ENCODE measurements at regions of chr14 and their contacts with region 1.

Region 1: GRCh38 chr14:71221119-71221518 is 313.9 kb downstream of the PCNX1 start:
- DNase-seq: no peak
- H3K4me3 Mint-ChIP-seq: no peak overlapping the region
- H3K27ac Mint-ChIP-seq: no peak overlapping the region
- H3K4me1 Mint-ChIP-seq: peaks cover 34% of the 10 kb centered on the region
- H3K27me3 Mint-ChIP-seq: peaks cover 3% of the 10 kb centered on the region

Region 2: DNA sequence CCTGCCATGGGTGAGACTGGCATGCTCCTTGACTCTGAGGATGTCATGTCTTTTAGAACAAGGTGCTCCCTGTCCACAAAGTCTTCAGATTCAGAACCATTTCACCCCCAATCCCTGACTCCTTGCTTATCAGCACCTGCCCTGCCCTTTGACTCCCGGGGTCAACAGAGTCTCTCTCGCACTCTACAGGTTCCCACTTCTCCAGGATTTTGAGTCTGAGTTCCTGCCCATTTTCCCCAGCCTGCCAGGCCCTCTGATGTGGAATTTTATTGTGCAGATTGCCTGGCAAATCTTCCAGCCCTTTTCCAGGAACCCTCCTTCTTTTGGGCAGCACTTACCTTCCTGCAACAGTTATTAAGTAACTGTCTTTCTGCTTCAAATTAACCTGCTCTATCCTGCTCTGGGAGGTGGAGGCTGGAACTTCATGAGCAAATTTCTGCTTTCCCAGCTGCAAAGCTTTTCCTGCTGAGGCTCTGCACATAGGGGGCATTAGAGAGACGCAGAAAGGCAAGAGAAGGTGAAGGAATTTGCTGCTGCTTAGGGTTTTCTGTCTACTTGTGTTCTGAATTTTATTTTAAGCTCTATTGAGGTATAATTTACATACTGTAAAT is 54.8 kb before region 1 on chr14:
- intact Hi-C with region 1: loop called (anchors 2 kb)
- DNase-seq: no peak
- H3K4me3 Mint-ChIP-seq: no peak overlapping the region
- H3K27ac Mint-ChIP-seq: no peak overlapping the region
- H3K4me1 Mint-ChIP-seq: peaks cover 20% of the 10 kb centered on the region
- H3K27me3 Mint-ChIP-seq: peaks cover 10% of the 10 kb centered on the region

Region 3: GRCh38 chr14:71290960-71291466 is 69.9 kb after region 1 on chr14:
- intact Hi-C with region 1: loop called (anchors 1 kb)
- DNase-seq: no peak
- H3K4me3 Mint-ChIP-seq: peak overlapping the region; percentile 6
- H3K27ac Mint-ChIP-seq: peak overlapping the region; percentile 81
- H3K4me1 Mint-ChIP-seq: peaks cover 31% of the 10 kb centered on the region
- H3K27me3 Mint-ChIP-seq: peaks cover 7% of the 10 kb centered on the region

Region 4: DNA sequence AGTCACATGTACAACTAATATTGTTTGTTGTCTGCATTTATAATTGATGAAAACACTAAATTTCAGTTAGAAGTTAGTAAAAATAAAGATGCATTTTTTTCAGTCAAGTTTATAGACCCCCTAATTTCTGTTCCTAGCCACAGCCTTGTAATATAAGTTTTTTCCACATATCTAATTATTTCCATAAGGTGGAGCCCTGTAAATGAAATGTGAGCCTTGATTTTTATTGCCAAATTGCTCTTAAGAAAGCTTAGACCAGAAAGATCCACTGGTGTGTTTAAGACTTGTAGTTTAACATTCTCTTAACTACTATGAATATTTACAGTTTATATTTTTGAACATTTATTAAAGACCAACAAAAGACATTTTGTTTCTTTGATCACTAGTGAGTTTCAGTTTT is 389.0 kb after region 1 on chr14:
- intact Hi-C with region 1: no loop called
- DNase-seq: no peak
- H3K4me3 Mint-ChIP-seq: no peak overlapping the region
- H3K27ac Mint-ChIP-seq: no peak overlapping the region
- H3K4me1 Mint-ChIP-seq: peaks cover 18% of the 10 kb centered on the region
- H3K27me3 Mint-ChIP-seq: no peaks in the 10 kb centered on the region

Measured in activated T-helper 1 cell treated with anti-CD3 and anti-CD28 coated beads, Interleukin-12 subunit alpha, Interleukin-12 subunit beta, Interleukin-2, Interleukin-4 antibody, amounts not matched to agents 30 ng/mL and 10 ng/mL and 1 ng/mL, durations not matched to agents 14 hours and 24 hours and 36 hours (primary cell).